Naive thymus-derived CD4-positive, alpha-beta T cell (primary cell): ENCODE measurements at regions of chr9 and their contacts with region 1.

Region 1: GRCh38 chr9:85741875-85742629 is at the start of gene AGTPBP1:
- DNase-seq: peak; percentile 95 to 99 (median 97)
- ATAC-seq: peak; percentile 93
- H3K4me3 ChIP-seq: peak within 1 kb of the TSS; percentile 88
- H3K4me3 Mint-ChIP-seq: peak within 1 kb of the TSS; percentile 90 to 99 (median 95)
- H3K27ac ChIP-seq: peak within 1 kb of the TSS; percentile 93
- H3K27ac Mint-ChIP-seq: peak within 1 kb of the TSS; percentile 91 to 99 (median 95)
- H3K4me1 ChIP-seq: peaks cover 0 to 14% of the 10 kb centered on the region in 2 donors
- H3K4me1 Mint-ChIP-seq: peaks cover 14 to 48% (median 33%) of the 10 kb centered on the region in 7 donors
- H3K27me3 ChIP-seq: no peaks in the 10 kb centered on the region
- H3K27me3 Mint-ChIP-seq: peaks cover 0 to 18% (median 0%) of the 10 kb centered on the region in 5 donors
- total RNA-seq, gene AGTPBP1: 31.9 to 85.7 (median 59.6) TPM

Region 2: GRCh38 chr9:85688361-85688760 is 53.7 kb before region 1 on chr9:
- CTCF ChIA-PET with region 1: no interaction called
- POLR2A ChIA-PET with region 1: no interaction called
- intact Hi-C with region 1: no loop called
- DNase-seq: no peak
- ATAC-seq: no peak
- H3K4me3 ChIP-seq: no peak overlapping the region
- H3K4me3 Mint-ChIP-seq: no peak overlapping the region
- H3K27ac ChIP-seq: no peak overlapping the region
- H3K27ac Mint-ChIP-seq: peak overlapping the region in 1 of 9 donors; percentile 16
- H3K4me1 ChIP-seq: no peaks in the 10 kb centered on the region
- H3K4me1 Mint-ChIP-seq: peaks cover 0 to 32% (median 18%) of the 10 kb centered on the region in 7 donors
- H3K27me3 ChIP-seq: no peaks in the 10 kb centered on the region
- H3K27me3 Mint-ChIP-seq: no peaks in the 10 kb centered on the region

Region 3: DNA sequence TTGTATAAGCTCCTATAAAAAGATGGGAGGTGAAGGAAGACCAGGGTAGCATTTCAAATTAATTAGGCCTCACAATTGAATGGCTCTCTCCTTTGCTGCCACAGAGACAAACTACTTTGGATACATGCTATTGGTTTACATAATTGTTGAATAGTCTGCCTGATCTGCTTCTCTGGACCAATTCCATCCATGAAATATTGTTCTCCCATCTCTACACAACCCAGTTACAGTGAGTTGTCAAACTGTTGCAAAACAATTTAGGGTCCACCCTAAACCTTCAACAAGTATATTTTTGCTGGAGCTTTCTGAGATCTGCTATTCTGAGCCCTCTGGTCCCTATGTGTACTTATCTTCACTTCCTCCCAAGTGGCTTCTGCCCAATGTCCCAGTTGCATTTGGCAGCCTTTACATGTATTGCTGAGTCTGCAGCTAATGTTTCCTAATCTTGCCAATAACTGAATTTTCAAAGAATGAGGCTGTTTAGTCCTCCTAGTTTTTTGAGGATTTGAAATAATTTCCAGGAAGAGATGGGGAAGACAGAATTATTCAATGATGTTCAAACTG is 39.2 kb before region 1 on chr9:
- CTCF ChIA-PET with region 1: interaction called, 7 read pairs
- POLR2A ChIA-PET with region 1: interaction called, 7 read pairs
- intact Hi-C with region 1: loop called (anchors 1 to 2 kb)
- DNase-seq: no peak
- ATAC-seq: no peak
- H3K4me3 ChIP-seq: no peak overlapping the region
- H3K4me3 Mint-ChIP-seq: no peak overlapping the region
- H3K27ac ChIP-seq: no peak overlapping the region
- H3K27ac Mint-ChIP-seq: peak overlapping the region in 3 of 9 donors; percentile 17 to 56 (median 44)
- H3K4me1 ChIP-seq: peaks cover 0 to 3% of the 10 kb centered on the region in 2 donors
- H3K4me1 Mint-ChIP-seq: peaks cover 21 to 64% (median 46%) of the 10 kb centered on the region in 7 donors
- H3K27me3 ChIP-seq: no peaks in the 10 kb centered on the region
- H3K27me3 Mint-ChIP-seq: no peaks in the 10 kb centered on the region

Region 4: DNA sequence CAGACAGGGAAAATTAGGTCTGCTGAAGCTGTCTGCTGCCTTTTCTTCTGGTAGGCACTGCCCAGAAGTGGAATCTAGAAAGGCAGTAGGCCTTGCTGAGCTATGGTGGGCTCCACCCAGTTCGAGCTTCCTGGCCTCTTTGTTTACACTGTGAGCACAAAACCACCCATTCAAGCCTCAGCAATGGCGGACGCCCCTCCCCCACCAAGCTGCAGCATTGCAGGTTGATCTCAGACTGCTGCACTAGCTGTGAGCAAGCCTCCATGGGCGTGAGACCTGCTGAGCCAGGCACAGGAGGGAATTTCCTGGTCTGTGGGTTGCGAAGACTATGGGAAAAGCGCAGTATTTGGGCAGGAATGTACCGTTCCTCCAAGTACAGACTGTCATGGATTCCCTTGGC is 18.8 kb before region 1 on chr9:
- CTCF ChIA-PET with region 1: interaction called, 6 read pairs
- POLR2A ChIA-PET with region 1: interaction called, 41 read pairs
- intact Hi-C with region 1: loop called (anchors 1 to 2 kb)
- DNase-seq: peak in 8 of 9 donors; percentile 40 to 89 (median 81)
- ATAC-seq: peak; percentile 81
- H3K4me3 ChIP-seq: peak overlapping the region; percentile 14
- H3K4me3 Mint-ChIP-seq: peak overlapping the region; percentile 26 to 81 (median 73)
- H3K27ac ChIP-seq: peak overlapping the region; percentile 55
- H3K27ac Mint-ChIP-seq: peak overlapping the region; percentile 63 to 96 (median 84)
- H3K4me1 ChIP-seq: peaks cover 19 to 23% of the 10 kb centered on the region in 2 donors
- H3K4me1 Mint-ChIP-seq: peaks cover 41 to 84% (median 66%) of the 10 kb centered on the region in 7 donors
- H3K27me3 ChIP-seq: no peaks in the 10 kb centered on the region
- H3K27me3 Mint-ChIP-seq: no peaks in the 10 kb centered on the region

Region 5: DNA sequence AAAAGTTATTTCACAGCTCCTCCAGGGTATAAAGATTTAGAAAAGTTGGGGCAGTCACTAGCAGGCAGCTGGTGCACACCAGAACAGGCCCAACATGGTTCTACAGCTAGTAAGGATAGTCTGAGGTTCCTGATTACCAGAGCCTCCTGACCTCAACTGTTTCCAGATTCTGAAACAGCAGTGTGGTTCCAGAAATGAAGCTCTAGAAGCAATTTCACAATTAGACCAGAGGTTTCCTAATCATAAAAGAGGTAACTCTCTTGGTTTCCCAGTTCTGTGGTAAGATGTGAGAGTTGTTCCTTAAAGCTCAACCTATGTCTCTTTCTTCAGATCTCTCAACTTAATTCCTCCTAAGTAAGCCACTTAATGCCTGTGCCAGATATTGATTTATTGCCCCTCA is 12.2 kb before region 1 on chr9:
- CTCF ChIA-PET with region 1: interaction called, 4 read pairs
- POLR2A ChIA-PET with region 1: interaction called, 41 read pairs
- intact Hi-C with region 1: no loop called
- DNase-seq: no peak
- ATAC-seq: peak; percentile 76
- H3K4me3 ChIP-seq: no peak overlapping the region
- H3K4me3 Mint-ChIP-seq: no peak overlapping the region
- H3K27ac ChIP-seq: no peak overlapping the region
- H3K27ac Mint-ChIP-seq: peak overlapping the region in 4 of 9 donors; percentile 19 to 38 (median 26)
- H3K4me1 ChIP-seq: peaks cover 4 to 14% of the 10 kb centered on the region in 2 donors
- H3K4me1 Mint-ChIP-seq: peaks cover 49 to 84% (median 74%) of the 10 kb centered on the region in 7 donors
- H3K27me3 ChIP-seq: no peaks in the 10 kb centered on the region
- H3K27me3 Mint-ChIP-seq: no peaks in the 10 kb centered on the region